A549 (cell line): ENCODE measurements at regions of chr21 and their contacts with region 1.

Region 1: DNA sequence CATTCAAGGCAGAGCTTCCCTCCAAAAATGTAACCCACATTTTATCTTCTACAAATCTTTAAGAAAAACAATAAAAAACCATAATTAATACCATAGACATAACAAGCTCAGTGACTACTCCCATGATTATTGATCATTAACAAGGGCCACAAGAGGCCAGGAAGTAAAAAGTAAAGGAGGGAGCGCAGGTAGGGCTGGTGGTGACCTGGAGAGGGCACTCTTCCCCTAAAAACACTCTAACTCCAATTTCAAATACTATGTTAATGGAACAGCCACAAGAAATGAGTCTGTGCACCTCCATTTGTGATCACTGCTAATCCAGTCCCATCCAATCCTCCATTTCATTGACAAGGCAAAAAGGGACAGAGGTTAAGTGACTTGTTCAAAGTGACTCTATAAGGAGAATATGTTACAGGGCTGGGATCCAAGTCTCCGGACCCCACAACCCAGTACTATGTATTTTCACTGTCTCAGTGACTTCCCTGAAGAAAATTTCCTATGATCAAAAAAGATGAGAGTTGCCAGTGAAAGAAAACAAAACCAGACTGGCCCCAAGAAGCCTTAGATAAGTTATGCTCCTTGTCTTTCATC is 41.2 kb upstream of the CFAP298 start:
- DNase-seq: peak; percentile 9 to 19
- ATAC-seq: peak; percentile 74 to 80; a peak in 4 of 6 replicates
- H3K4me3 ChIP-seq: no peak overlapping the region
- H3K27ac ChIP-seq: no peak overlapping the region
- H3K4me1 ChIP-seq: no peaks in the 10 kb centered on the region
- CTCF ChIP-seq: peak; percentile 55
- EP300 ChIP-seq: no peak
- POLR2A ChIP-seq: no peak
- RAD21 ChIP-seq: peak; percentile 56 to 63

Region 2: GRCh38 chr21:32612075-32612998 is 41.1 kb before region 1 on chr21 and contains the start of gene CFAP298:
- CTCF ChIA-PET with region 1: no interaction called
- POLR2A ChIA-PET with region 1: no interaction called
- DNase-seq: peak; percentile 73 to 92
- ATAC-seq: peak; percentile 98
- H3K4me3 ChIP-seq: peak within 1 kb of the TSS; percentile 54
- H3K27ac ChIP-seq: peak within 1 kb of the TSS; percentile 89 to 99
- H3K4me1 ChIP-seq: 0 out of 3 replicates have a peak, but pooled peaks cover 8% of the 10 kb centered on the region
- CTCF ChIP-seq: no peak
- EP300 ChIP-seq: no peak
- POLR2A ChIP-seq: peak; percentile 75
- RAD21 ChIP-seq: no peak
- polyA plus RNA-seq, gene CFAP298: 22.2 and 35.6 TPM in 2 replicates

Region 3: GRCh38 chr21:32826329-32827167 is 173.1 kb after region 1 on chr21:
- CTCF ChIA-PET with region 1: interaction called, 10 read pairs
- POLR2A ChIA-PET with region 1: no interaction called
- DNase-seq: peak; percentile 18 to 63
- ATAC-seq: peak; percentile 95
- H3K4me3 ChIP-seq: no peak overlapping the region
- H3K27ac ChIP-seq: no peak overlapping the region
- H3K4me1 ChIP-seq: no peaks in the 10 kb centered on the region
- CTCF ChIP-seq: peak; percentile 43
- EP300 ChIP-seq: no peak
- POLR2A ChIP-seq: no peak
- RAD21 ChIP-seq: peak; percentile 40 to 59; a peak in 3 of 5 replicates